ENCODE measurements at regions of chr1 and their contacts with region 1.

Region 1: GRCh38 chr1:176119549-176119948 is 87.5 kb downstream of the COP1 start:
- DNase-seq: peak; percentile 49
- H3K4me3 ChIP-seq: no peak overlapping the region
- H3K27ac ChIP-seq: no peak overlapping the region
- H3K4me1 ChIP-seq: no peaks in the 10 kb centered on the region
- CTCF ChIP-seq: peak; percentile 85

Region 2: GRCh38 chr1:176033881-176034280 is 85.7 kb before region 1 on chr1:
- CTCF ChIA-PET with region 1: no interaction called
- POLR2A ChIA-PET with region 1: no interaction called
- intact Hi-C with region 1: no loop called
- DNase-seq: no peak
- H3K4me3 ChIP-seq: no peak overlapping the region
- H3K27ac ChIP-seq: no peak overlapping the region
- H3K4me1 ChIP-seq: no peaks in the 10 kb centered on the region
- CTCF ChIP-seq: no peak

Region 3: DNA sequence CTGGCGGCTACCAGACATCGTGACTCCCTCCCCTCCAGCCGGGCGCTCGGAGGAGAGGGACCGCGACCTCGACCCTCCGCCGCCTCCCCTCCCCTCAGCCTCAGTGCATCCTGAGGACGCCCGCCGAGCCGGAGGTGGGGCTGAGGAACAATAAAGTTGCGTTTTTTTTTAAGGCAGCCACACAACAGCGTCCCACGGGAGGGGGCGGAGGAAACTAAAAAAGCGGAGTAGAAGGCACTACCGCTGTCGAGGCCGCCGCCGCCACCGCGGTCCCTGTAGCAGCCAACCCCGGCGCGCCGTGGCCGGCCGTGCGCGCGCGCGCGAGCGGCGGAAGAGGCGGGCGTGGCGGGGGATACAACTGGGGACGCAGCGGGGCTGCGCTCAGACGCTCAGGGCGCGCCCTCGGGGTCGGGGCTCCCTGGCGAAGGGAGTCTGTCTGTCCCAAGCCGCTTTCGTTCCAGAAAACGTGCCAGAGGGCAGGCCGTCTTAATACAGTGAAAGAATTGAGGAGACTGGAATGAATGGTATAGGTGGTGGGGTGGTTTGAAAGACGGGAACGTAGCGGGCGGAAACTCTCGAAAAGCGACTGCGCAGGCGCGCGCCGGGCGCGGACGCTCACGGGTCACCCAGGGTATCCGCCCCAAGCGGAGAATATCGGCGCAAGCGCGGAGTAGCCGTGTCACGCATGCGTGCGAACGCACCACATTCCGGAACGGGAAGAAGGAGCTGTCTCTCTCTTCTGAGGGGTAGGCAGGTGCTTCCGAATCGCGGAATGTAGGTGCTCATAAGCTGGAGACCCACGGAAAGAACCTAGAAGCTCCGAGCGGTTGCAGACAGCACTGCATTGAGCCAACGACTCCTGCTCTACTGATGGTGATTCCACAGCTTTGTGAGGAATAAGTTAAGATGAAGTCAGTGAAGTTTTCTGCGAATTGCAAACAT is 87.7 kb after region 1 on chr1 and contains the start of gene COP1:
- CTCF ChIA-PET with region 1: no interaction called
- POLR2A ChIA-PET with region 1: interaction called, 4 read pairs
- intact Hi-C with region 1: loop called (anchors 1 kb)
- DNase-seq: peak; percentile 99
- H3K4me3 ChIP-seq: peak within 1 kb of the TSS; percentile 99
- H3K27ac ChIP-seq: peak within 1 kb of the TSS; percentile 94
- H3K4me1 ChIP-seq: peaks cover 30% of the 10 kb centered on the region
- CTCF ChIP-seq: 0 out of 2 replicates have a peak, but pooled peaks have one; percentile 8
- total RNA-seq, gene COP1: 75.2 and 78.2 TPM in 2 replicates